OCI-LY7 (cell line): ENCODE measurements at regions of chr1 and their contacts with region 1.

Region 1: GRCh38 chr1:151327223-151327902 is at the start of gene PI4KB:
- DNase-seq: peak; percentile 97
- H3K4me3 ChIP-seq: peak within 1 kb of the TSS; percentile 74
- H3K27ac ChIP-seq: peak within 1 kb of the TSS; percentile 67
- H3K4me1 ChIP-seq: peaks cover 23% of the 10 kb centered on the region
- CTCF ChIP-seq: no peak
- total RNA-seq, gene PI4KB: 36.9 and 38.0 TPM in 2 replicates

Region 2: GRCh38 chr1:151238467-151238739 is 89.0 kb before region 1 on chr1:
- CTCF ChIA-PET with region 1: no interaction called
- POLR2A ChIA-PET with region 1: no interaction called
- intact Hi-C with region 1: no loop called
- DNase-seq: no peak
- H3K4me3 ChIP-seq: no peak overlapping the region
- H3K27ac ChIP-seq: peak overlapping the region; percentile 34
- H3K4me1 ChIP-seq: peaks cover 13% of the 10 kb centered on the region
- CTCF ChIP-seq: no peak

Region 3: GRCh38 chr1:151315565-151316210 is 11.7 kb before region 1 on chr1:
- CTCF ChIA-PET with region 1: no interaction called
- POLR2A ChIA-PET with region 1: interaction called, 11 read pairs
- intact Hi-C with region 1: no loop called
- DNase-seq: no peak
- H3K4me3 ChIP-seq: no peak overlapping the region
- H3K27ac ChIP-seq: no peak overlapping the region
- H3K4me1 ChIP-seq: no peaks in the 10 kb centered on the region
- CTCF ChIP-seq: no peak

Region 4: GRCh38 chr1:151372061-151372934 is 44.9 kb after region 1 on chr1 and contains the start of gene SELENBP1:
- CTCF ChIA-PET with region 1: no interaction called
- POLR2A ChIA-PET with region 1: no interaction called
- intact Hi-C with region 1: no loop called
- DNase-seq: no peak
- H3K4me3 ChIP-seq: no peak within 1 kb of the TSS
- H3K27ac ChIP-seq: no peak within 1 kb of the TSS
- H3K4me1 ChIP-seq: peaks cover 6% of the 10 kb centered on the region
- CTCF ChIP-seq: no peak
- total RNA-seq, gene SELENBP1: not detected in 2 replicates

Region 5: DNA sequence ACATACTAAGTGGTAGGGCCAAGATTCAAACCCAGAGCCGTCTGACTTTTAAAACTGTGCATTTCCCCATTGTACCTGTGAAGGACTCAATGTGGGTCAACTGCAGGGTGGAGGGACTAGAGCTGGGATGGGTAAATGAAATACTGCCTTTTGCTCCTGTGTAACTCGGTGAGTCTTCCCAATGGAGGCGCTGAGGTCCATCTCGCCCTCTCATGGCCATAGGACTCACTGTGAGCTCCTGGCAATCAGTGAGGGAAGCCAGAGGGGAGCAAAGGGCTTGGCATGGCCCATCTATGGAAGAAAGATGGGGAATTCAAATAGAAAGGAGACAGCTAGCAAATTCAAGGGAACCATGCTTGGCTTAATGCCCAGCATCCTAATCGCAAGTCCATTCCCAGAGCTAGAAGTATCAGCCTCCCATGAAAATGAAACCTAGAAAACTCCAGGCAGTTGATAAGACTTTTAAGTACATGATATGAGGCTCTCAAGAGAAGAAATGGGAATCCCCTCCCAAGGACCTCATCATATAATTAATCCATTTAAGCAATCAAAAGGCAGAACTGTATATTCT is 158.4 kb after region 1 on chr1:
- CTCF ChIA-PET with region 1: no interaction called
- POLR2A ChIA-PET with region 1: no interaction called
- intact Hi-C with region 1: no loop called
- DNase-seq: no peak
- H3K4me3 ChIP-seq: no peak overlapping the region
- H3K27ac ChIP-seq: no peak overlapping the region
- H3K4me1 ChIP-seq: no peaks in the 10 kb centered on the region
- CTCF ChIP-seq: no peak